ENCODE measurements at regions of chr3 and their contacts with region 1.

Region 1: DNA sequence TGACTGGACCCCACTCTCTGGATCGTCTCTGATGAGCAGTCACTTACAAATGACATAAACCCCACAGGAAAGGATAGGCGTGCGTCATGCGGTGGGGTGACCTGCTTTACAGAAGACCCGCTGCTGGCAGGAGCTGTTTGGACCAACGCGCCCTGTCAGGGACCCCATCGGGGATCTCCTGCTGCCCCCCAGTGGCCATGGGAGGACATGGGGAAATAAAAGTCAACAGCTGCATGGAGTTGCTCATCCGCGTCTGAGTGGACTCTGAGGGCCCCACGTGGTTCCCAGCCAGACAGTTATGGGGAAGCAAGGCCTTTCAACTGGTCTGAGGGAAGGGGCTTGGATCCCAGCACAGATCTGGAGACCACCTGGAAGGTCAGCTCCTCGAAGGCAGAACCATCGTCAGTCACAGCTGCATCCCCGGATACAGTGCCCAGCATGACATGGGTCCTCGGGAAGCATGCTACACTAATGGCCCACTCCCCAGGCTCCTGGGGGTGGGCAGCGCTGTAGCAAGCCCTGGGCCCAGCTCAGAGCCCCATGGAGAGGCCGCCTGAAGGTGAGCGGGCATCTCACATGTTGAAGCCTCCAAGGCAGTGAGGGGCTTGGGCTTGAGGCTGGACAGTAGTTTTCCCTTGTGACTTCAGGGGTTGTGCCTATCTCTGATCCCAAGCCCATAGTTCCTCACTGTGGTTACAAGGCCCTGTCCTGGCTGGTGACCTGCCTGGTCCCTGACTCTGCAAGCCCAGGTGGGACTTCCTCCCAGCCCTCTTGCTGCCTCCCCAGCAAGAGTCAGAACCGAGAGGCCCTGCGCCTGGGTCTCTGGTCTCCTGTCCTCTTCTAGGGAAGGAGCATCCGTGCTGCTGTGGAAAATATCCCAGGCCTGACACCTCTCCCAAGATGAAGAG is 32.3 kb downstream of the PTH1R start:
- DNase-seq: peak; percentile 80 to 90 (median 88)
- H3K4me3 ChIP-seq: peak overlapping the region in 1 of 7 experiments; percentile 14
- H3K27ac ChIP-seq: no peak overlapping the region
- H3K4me1 ChIP-seq: peaks cover 0 to 10% (median 3%) of the 10 kb centered on the region in 4 experiments
- H3K27me3 ChIP-seq: no peaks in the 10 kb centered on the region

Region 2: GRCh38 chr3:46713898-46714552 is 195.8 kb before region 1 on chr3:
- CTCF ChIA-PET with region 1: interaction called, 16 read pairs
- POLR2A ChIA-PET with region 1: no interaction called
- DNase-seq: no peak
- H3K4me3 ChIP-seq: no peak overlapping the region
- H3K27ac ChIP-seq: no peak overlapping the region
- H3K4me1 ChIP-seq: no peaks in the 10 kb centered on the region
- H3K27me3 ChIP-seq: no peaks in the 10 kb centered on the region

Region 3: DNA sequence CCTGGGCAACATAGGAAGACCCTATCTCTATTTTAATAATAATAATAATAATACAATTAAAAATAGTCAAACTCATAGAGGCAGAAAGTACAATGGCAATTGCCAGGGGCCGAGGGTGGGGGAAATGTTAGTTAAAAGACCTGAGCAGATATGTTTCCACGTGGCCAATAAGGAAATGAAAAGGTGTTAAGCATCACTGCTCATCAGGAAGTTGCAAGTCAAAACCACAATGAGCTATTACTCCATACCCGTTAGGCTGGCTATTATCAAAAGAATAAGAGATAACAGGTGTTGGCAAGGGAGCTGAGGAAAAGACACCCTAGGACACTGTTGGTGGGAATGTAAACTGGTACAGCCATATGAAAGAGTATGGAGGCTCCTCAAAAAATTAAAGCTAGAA is 131.7 kb before region 1 on chr3:
- CTCF ChIA-PET with region 1: no interaction called
- POLR2A ChIA-PET with region 1: no interaction called
- DNase-seq: peak in 1 of 3 donors; percentile 4
- H3K4me3 ChIP-seq: no peak overlapping the region
- H3K27ac ChIP-seq: no peak overlapping the region
- H3K4me1 ChIP-seq: no peaks in the 10 kb centered on the region
- H3K27me3 ChIP-seq: no peaks in the 10 kb centered on the region

Region 4: DNA sequence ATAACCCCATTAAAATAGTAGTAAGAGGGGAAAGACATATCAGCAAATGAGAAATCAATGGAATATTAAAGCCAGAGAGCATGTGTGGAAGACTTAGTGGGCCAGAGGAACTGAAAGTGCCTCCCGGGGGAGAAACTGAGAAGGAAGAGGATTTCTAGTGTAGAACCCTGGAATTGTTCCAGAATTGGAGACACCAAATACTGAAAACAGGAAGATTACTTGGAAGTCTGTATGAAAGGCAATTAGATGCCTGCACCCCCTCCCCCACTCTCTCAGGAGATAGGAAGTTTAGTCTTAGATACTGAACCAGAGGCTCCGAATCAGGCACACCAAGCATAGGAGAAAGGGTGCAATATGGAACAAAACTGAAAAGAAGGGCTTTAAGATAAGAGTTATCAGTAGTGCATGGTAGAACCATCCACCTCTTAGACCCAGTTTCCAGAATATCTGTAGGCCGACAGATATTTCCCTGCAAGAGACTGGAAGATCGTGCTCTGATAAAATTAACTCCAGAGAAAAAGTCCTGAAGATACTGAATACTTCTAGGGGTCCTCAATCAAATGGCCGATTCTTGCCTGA is 405.4 kb after region 1 on chr3:
- CTCF ChIA-PET with region 1: no interaction called
- POLR2A ChIA-PET with region 1: no interaction called
- DNase-seq: no peak
- H3K4me3 ChIP-seq: peak overlapping the region in 1 of 7 experiments; percentile 46
- H3K27ac ChIP-seq: peak overlapping the region in 1 of 2 experiments; percentile 45
- H3K4me1 ChIP-seq: peaks cover 0 to 11% (median 6%) of the 10 kb centered on the region in 4 experiments
- H3K27me3 ChIP-seq: no peaks in the 10 kb centered on the region

Measured in common myeloid progenitor, CD34-positive (primary cell).